ENCODE measurements at regions of chr12 and their contacts with region 1.

Region 1: GRCh38 chr12:71415336-71416231 is 24.0 kb upstream of the LGR5 start:
- DNase-seq: peak; percentile 7
- ATAC-seq: peak; percentile 92
- H3K4me3 ChIP-seq: no peak overlapping the region
- H3K27ac ChIP-seq: no peak overlapping the region
- H3K4me1 ChIP-seq: no peaks in the 10 kb centered on the region
- H3K27me3 ChIP-seq: no peaks in the 10 kb centered on the region
- CTCF ChIP-seq: peak; percentile 67 to 75 (median 70)
- EP300 ChIP-seq: no peak
- POLR2A ChIP-seq: no peak
- RAD21 ChIP-seq: peak; percentile 76

Region 2: DNA sequence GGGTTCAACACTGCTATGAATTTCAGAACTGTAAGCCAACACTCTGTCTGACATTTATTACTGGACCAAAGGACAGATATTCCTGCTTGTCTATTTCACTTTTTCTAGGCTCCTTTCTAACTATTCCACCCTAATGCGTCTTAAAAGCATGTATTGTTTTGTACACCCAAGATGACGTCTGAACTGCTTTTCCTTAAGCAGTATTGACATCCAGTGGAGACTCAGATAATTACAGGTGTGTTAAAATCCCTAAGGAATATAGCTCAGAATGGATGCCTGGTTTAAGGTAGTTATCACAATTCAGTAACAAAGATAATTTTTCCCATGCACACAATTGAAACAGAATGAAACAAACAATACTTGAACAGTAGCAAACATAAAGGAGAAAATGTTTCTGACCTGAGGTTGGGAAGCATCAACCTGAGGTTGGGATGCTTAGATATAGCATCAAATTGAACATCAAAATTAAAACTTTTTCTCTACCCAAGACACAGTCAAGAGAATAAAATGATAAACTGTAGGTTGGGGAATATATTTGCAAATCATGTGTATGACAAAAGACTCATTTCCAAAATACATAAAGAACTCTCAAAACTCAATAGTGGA is 401.3 kb before region 1 on chr12:
- CTCF ChIA-PET with region 1: no interaction called
- POLR2A ChIA-PET with region 1: no interaction called
- RAD21 ChIA-PET with region 1: no interaction called
- SMC1A ChIA-PET with region 1: no interaction called
- in situ Hi-C with region 1: no loop called
- intact Hi-C with region 1: no loop called
- DNase-seq: no peak
- ATAC-seq: no peak
- H3K4me3 ChIP-seq: no peak overlapping the region
- H3K27ac ChIP-seq: no peak overlapping the region
- H3K4me1 ChIP-seq: no peaks in the 10 kb centered on the region
- H3K27me3 ChIP-seq: no peaks in the 10 kb centered on the region
- CTCF ChIP-seq: no peak
- EP300 ChIP-seq: no peak
- POLR2A ChIP-seq: no peak
- RAD21 ChIP-seq: peak; percentile 38

Region 3: DNA sequence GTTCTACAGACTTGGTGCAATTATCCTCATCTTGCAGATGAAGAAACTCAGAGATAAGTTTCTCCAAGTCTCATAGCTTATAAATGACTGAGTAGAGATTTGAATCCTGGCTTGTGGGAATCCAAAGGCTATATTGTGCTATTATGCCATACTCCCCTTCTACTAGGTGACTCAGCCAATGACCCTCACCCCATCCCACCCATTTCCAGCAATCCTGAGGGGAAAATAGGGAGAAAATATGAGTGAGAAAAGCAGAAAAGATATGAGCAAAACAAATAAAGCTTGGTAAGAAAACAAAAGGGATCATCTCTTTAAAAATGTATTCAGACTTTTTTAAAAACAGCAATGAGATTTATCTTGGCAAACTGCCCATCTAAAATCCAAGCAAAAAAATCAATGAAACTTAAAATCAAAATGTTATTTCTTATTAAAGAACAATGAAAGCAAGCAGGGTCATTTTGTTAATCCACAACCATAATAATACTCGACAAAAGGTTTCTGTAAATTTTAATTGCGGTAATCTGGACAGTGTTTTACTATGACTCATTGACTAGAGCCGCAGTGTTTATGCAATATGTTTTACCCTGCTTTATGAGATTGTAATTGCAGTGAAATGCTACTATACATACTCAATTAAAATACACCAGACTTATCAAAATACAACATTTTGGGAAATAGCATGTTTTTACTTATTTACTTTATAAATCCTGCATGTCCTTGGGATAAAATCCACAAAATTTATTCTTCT is 10.9 kb after region 1 on chr12:
- CTCF ChIA-PET with region 1: interaction called, 10 read pairs
- POLR2A ChIA-PET with region 1: no interaction called
- RAD21 ChIA-PET with region 1: interaction called, 3 read pairs
- SMC1A ChIA-PET with region 1: no interaction called
- in situ Hi-C with region 1: no loop called
- intact Hi-C with region 1: no loop called
- DNase-seq: no peak
- ATAC-seq: no peak
- H3K4me3 ChIP-seq: no peak overlapping the region
- H3K27ac ChIP-seq: no peak overlapping the region
- H3K4me1 ChIP-seq: no peaks in the 10 kb centered on the region
- H3K27me3 ChIP-seq: no peaks in the 10 kb centered on the region
- CTCF ChIP-seq: no peak
- EP300 ChIP-seq: no peak
- POLR2A ChIP-seq: no peak
- RAD21 ChIP-seq: no peak

Region 4: DNA sequence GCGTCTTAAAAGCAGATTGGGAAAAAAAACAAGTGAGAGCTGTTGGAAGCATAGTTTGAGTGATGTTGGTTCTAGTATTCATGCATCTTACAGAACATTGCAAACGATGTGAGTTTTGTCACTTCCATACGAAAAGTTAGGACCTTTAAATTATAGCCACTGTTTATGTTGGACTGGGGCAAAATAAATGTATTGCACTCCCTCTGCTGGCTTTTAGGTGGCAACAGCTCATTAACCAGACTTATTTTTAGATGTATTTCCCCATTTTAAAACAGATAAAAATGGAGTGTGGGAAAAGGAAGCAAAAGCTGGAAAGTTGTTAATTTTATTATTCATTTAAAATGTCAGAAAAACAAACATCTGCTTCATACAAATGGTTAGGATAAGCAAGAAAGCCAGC is 135.9 kb after region 1 on chr12:
- CTCF ChIA-PET with region 1: interaction called, 30 read pairs
- POLR2A ChIA-PET with region 1: no interaction called
- RAD21 ChIA-PET with region 1: interaction called, 8 read pairs
- SMC1A ChIA-PET with region 1: interaction called, 9 read pairs
- in situ Hi-C with region 1: no loop called
- intact Hi-C with region 1: loop called (anchors 1 kb)
- DNase-seq: no peak
- ATAC-seq: peak; percentile 34; the same call in 2 of the 3 replicates
- H3K4me3 ChIP-seq: no peak overlapping the region
- H3K27ac ChIP-seq: no peak overlapping the region
- H3K4me1 ChIP-seq: no peaks in the 10 kb centered on the region
- H3K27me3 ChIP-seq: no peaks in the 10 kb centered on the region
- CTCF ChIP-seq: peak; percentile 8 to 40 (median 10); a peak in 2 of 6 replicates
- EP300 ChIP-seq: no peak
- POLR2A ChIP-seq: no peak
- RAD21 ChIP-seq: no peak

Region 5: DNA sequence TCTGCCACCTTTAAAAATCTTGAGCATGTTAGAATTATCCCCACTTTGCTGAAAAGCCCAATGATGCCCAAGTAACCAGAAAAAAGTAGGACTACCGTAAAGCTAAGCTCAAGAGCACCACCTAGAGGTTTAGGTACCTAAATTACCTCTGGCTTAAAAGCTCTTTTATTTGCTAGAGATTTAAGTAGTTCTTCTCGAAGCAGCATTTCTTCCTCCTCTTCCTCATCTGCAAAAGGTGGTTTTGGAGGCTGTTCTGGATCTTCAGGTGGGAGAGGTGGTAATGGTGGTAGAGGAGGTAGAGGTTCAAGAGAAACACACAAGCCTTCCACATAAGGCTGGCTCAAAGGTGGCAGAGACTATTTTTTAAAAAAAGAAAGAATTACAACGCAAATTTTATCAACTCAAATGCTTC is 221.1 kb after region 1 on chr12:
- CTCF ChIA-PET with region 1: interaction called, 30 read pairs
- POLR2A ChIA-PET with region 1: no interaction called
- RAD21 ChIA-PET with region 1: interaction called, 6 read pairs
- SMC1A ChIA-PET with region 1: interaction called, 15 read pairs
- in situ Hi-C with region 1: loop called (anchors 10 kb)
- intact Hi-C with region 1: loop called (anchors 2 kb)
- DNase-seq: peak; percentile 12
- ATAC-seq: peak; percentile 81
- H3K4me3 ChIP-seq: no peak overlapping the region
- H3K27ac ChIP-seq: no peak overlapping the region
- H3K4me1 ChIP-seq: no peaks in the 10 kb centered on the region; the same call in 1 of the 2 replicates
- H3K27me3 ChIP-seq: no peaks in the 10 kb centered on the region
- CTCF ChIP-seq: peak; percentile 65 to 73 (median 71)
- EP300 ChIP-seq: no peak
- POLR2A ChIP-seq: no peak
- RAD21 ChIP-seq: peak; percentile 63

Region 6: DNA sequence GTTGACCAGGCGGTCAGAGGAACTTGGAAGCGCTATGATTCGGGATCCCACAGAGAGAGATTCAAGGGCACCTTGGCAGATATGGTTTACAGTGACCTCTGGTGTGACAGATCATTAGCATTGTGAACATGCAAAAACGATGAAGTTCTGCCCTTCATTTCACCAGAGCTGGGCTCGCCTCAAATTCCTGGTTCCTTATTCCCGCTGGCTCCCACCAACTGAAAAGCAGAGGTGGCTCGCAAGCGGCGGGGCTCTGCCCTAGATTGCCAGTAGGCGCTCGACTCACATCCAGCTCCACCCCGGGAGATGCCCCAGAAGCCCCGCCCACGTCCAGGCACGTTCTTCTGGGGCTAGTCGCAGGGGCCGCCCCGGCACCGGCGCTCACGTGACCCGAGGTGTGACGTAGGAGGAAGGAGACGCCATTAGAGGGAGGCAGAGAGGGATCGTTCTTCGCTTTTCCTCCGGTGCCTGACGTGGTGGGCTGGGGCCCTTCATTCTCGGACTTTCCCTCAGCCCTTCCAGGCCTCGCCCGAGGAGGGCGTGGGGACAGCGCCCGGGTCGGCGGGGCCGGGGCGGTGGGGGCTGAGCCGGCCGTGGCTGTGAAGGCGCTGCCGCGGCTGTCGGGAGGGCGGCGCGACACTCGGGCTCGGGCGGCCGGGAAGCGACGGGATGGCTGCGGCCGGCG is 339.0 kb after region 1 on chr12 and contains the start of gene RAB21:
- CTCF ChIA-PET with region 1: interaction called, 107 read pairs
- POLR2A ChIA-PET with region 1: no interaction called
- RAD21 ChIA-PET with region 1: no interaction called
- SMC1A ChIA-PET with region 1: interaction called, 48 read pairs
- in situ Hi-C with region 1: loop called (anchors 5 kb)
- intact Hi-C with region 1: no loop called
- DNase-seq: peak; percentile 70
- ATAC-seq: peak; percentile 92
- H3K4me3 ChIP-seq: peak within 1 kb of the TSS; percentile 96
- H3K27ac ChIP-seq: peak within 1 kb of the TSS; percentile 94
- H3K4me1 ChIP-seq: peaks cover 4% of the 10 kb centered on the region
- H3K27me3 ChIP-seq: no peaks in the 10 kb centered on the region; a peak in 1 of 4 replicates
- CTCF ChIP-seq: 0 out of 6 replicates have a peak, but pooled peaks of 1 of the 3 experiments have one; percentile 12
- EP300 ChIP-seq: no peak
- POLR2A ChIP-seq: peak; percentile 93
- RAD21 ChIP-seq: 0 out of 2 replicates have a peak, but pooled peaks have one; percentile 1
- polyA plus RNA-seq, gene RAB21: 5.3 to 8.2 TPM